Esophagus muscularis mucosa (tissue), 4 donors: ENCODE measurements at regions of chr22 and their contacts with region 1.

Region 1: DNA sequence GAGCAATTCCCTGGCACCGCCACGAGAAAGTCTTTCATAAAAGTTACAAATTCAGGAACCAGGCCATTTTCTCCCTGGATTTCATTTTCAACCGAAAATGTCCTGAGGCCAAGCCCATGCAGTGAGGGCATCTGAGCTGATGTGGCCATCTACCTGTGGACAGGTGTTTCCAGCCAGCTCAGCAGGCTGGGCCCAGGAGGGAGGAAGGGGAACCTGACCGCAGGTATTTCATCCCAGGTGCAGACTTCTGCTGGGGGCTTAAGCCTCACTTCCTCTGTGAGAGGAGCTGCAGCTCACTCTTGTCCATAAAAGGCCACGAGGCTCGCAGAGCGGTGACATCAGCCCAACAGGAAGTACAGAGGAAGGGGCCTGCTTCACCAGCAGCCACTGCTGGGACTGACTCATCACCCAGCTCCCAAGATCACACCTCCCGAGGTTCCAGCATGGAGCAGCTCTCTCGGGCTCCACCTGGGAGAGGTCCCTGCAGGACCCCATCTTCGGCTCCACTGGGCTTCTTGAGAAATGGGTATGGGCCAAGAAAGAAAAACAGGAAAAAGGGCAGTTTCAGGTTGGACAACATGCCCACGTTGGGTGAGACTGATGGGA is 56.4 kb downstream of the MYH9 start:
- DNase-seq: peak; percentile 97
- H3K4me3 ChIP-seq: peak overlapping the region; percentile 3 to 15 (median 10)
- H3K27ac ChIP-seq: peak overlapping the region; percentile 95 to 100 (median 98)
- H3K4me1 ChIP-seq: peaks cover 100% of the 10 kb centered on the region in 4 donors
- H3K27me3 ChIP-seq: no peaks in the 10 kb centered on the region
- CTCF ChIP-seq: no peak
- EP300 ChIP-seq: no peak
- POLR2A ChIP-seq: no peak

Region 2: DNA sequence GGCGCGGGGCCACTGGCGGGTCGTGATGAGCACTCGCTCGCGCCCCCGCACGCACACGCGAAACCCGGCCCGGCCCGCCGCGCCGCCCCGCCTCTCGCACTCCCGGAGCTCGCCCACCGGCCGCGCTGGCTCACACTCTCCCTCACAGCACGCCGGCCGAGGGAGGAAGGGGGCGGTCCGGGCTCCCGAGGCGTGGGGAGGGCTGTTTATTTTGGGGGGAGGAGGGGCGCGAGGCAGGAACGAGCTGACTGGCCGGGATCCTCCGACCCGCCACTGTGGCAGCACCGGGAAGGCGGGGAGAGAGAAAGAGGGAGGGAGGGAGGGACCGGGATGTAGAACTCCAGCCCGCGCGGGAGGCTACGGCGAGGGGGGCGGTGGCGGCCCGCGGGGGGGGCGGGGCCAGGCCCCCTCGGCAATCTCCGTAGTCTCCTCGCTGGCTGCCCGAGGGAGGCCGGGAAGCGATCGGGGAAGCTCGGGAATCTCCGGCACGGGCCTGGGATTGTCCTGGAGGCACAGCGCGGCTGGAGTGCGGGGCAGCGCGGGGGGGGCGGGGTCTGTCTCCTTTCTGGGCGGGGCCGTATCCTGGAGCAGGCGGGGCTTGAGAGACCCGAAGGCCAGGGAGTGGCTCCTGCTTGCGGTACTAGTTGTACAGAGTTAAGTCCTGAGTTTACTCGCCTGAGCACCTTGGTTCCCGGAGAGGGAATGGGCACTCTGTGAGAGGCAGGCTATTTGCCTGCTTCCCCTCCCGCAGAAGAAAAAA is 302.6 kb before region 1 on chr22 and contains the start of gene RBFOX2:
- intact Hi-C with region 1: no loop called
- DNase-seq: peak; percentile 98
- H3K4me3 ChIP-seq: peak within 1 kb of the TSS; percentile 72 to 95 (median 92)
- H3K27ac ChIP-seq: peak within 1 kb of the TSS; percentile 94 to 97 (median 96)
- H3K4me1 ChIP-seq: peaks cover 23 to 48% (median 42%) of the 10 kb centered on the region in 4 donors
- H3K27me3 ChIP-seq: no peaks in the 10 kb centered on the region
- CTCF ChIP-seq: no peak
- EP300 ChIP-seq: no peak
- POLR2A ChIP-seq: no peak
- total RNA-seq, gene RBFOX2: 113 to 179 (median 155) TPM

Region 3: GRCh38 chr22:36252754-36253517 is 78.5 kb before region 1 on chr22 and contains the start of gene APOL1:
- intact Hi-C with region 1: no loop called
- DNase-seq: no peak
- H3K4me3 ChIP-seq: peak within 1 kb of the TSS; percentile 50 to 60 (median 53)
- H3K27ac ChIP-seq: peak within 1 kb of the TSS; percentile 79 to 86 (median 84)
- H3K4me1 ChIP-seq: peaks cover 26 to 49% (median 46%) of the 10 kb centered on the region in 4 donors
- H3K27me3 ChIP-seq: no peaks in the 10 kb centered on the region
- CTCF ChIP-seq: no peak
- EP300 ChIP-seq: no peak
- POLR2A ChIP-seq: no peak
- total RNA-seq, gene APOL1: 19.0 to 48.8 (median 28.0) TPM

Region 4: DNA sequence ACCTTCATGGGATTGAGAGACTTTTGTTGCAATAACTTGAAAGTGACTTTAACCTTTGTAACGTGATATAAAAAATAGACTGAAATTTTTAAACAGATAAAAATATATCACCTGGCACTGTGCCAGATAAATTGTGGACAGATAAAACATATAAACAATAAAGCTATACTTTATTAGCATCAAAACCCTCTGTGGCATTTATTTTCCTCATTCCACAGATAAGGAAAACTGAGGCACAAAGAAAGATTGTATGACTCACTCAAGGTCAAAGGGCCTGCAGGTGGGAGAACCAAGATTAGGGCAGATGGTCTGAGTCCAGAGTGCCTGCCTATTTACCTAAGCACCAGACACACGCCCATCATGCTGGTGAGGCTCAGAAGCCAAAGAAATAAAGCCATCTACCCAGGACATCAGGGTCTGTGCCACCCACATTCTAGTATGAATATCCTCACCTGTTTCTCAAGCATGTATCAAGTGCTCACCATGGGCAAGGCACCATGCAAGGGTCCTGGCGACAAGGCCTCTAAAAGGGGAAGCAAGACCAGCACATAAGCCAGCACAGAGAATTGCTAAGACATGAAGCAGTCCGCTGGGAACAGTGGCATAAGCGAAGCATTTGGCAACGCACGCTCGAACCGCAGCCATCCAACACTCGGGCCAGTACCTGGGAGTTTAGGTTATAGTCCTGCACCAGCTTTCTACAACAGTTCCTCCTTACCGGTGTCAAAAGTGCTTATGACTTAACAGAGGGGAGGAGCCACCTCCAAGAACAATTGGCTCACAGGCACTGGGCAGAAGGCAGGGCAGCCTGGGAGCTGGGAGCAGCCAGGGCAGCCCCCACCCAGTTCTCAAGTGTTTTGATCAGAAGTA is 38.7 kb after region 1 on chr22:
- intact Hi-C with region 1: loop called (anchors 5 kb)
- DNase-seq: no peak
- H3K4me3 ChIP-seq: peak overlapping the region; percentile 17 to 45 (median 32)
- H3K27ac ChIP-seq: peak overlapping the region; percentile 95 to 100 (median 98)
- H3K4me1 ChIP-seq: peaks cover 100% of the 10 kb centered on the region in 4 donors
- H3K27me3 ChIP-seq: no peaks in the 10 kb centered on the region
- CTCF ChIP-seq: no peak
- EP300 ChIP-seq: no peak
- POLR2A ChIP-seq: no peak

Region 5: GRCh38 chr22:36387752-36388518 is 56.5 kb after region 1 on chr22 and contains the start of gene MYH9:
- intact Hi-C with region 1: loop called (anchors 2 kb)
- DNase-seq: peak; percentile 100
- H3K4me3 ChIP-seq: peak within 1 kb of the TSS; percentile 73 to 94 (median 84)
- H3K27ac ChIP-seq: peak within 1 kb of the TSS; percentile 95 to 100 (median 98)
- H3K4me1 ChIP-seq: peaks cover 16 to 51% (median 37%) of the 10 kb centered on the region in 4 donors
- H3K27me3 ChIP-seq: no peaks in the 10 kb centered on the region
- CTCF ChIP-seq: peak in 1 of 3 experiments; percentile 3
- EP300 ChIP-seq: no peak
- POLR2A ChIP-seq: peak; percentile 99
- total RNA-seq, gene MYH9: 241 to 387 (median 358) TPM